Pancreas (tissue), 10 donors: ENCODE measurements at regions of chr1 and their contacts with region 1.

Region 1: GRCh38 chr1:163509114-163509513 is 187.4 kb downstream of the NUF2 start:
- DNase-seq: no peak
- ATAC-seq: no peak
- H3K4me3 ChIP-seq: no peak overlapping the region
- H3K27ac ChIP-seq: no peak overlapping the region
- H3K4me1 ChIP-seq: no peaks in the 10 kb centered on the region
- H3K27me3 ChIP-seq: no peaks in the 10 kb centered on the region
- CTCF ChIP-seq: no peak

Region 2: GRCh38 chr1:163013826-163014600 is 495.1 kb before region 1 on chr1:
- intact Hi-C with region 1: no loop called
- DNase-seq: no peak
- ATAC-seq: no peak
- H3K4me3 ChIP-seq: no peak overlapping the region
- H3K27ac ChIP-seq: no peak overlapping the region
- H3K4me1 ChIP-seq: no peaks in the 10 kb centered on the region
- H3K27me3 ChIP-seq: peaks cover 0 to 3% (median 0%) of the 10 kb centered on the region in 4 donors
- CTCF ChIP-seq: no peak

Region 3: DNA sequence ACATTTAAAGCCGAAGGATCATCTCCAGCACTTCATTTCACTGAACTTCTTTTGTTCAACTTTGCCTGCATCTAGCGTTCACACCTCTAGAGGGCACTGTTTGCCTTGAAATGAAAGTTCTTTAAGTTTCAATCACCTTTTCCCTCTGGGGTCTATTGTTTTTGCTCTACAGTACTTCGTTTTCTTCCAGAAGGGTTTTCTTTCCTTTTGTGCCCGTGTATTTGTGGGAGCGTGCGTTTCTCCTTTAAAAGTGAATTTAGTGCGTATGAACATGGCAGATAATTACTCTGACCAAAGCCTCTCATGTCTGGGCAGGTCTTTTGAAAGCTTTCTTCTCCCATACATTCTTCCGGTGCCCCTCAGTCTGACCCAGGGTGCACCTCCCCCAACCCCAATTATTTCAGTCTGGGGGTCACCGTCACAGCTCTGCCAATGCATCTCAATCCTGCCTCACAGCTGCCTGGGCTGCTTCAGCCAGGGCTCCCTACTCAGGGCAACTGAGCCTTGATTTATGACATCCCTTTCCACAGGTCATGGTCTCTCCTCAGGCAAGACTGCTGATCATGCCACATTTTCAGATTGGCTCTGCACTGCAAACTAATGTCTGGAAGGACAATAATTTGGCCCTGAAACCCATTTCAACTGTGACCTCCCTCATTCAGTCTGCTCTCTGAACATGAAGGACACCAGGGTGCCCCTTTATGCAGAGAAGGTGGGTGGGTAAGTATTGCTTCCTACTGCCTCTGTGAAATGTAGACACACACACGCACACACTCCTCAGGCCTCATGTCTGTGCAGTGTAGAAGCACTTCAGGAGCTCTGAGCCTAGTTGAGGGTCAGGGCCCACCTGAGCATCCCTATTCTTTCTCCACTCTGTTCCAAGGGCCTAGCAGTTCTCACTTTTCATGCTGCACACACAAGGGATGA is 98.8 kb before region 1 on chr1:
- intact Hi-C with region 1: loop called in 1 of 3 experiments (anchors 10 kb)
- DNase-seq: peak in 2 of 6 donors; percentile 17 to 33
- ATAC-seq: peak in 2 of 4 donors; percentile 56 to 61
- H3K4me3 ChIP-seq: no peak overlapping the region
- H3K27ac ChIP-seq: no peak overlapping the region
- H3K4me1 ChIP-seq: no peaks in the 10 kb centered on the region
- H3K27me3 ChIP-seq: no peaks in the 10 kb centered on the region
- CTCF ChIP-seq: peak; percentile 60 to 77 (median 68)